ENCODE measurements at regions of chr21 and their contacts with region 1.

Region 1: GRCh38 chr21:31088315-31088714 is 50.0 kb upstream of the KRTAP19-8 start:
- DNase-seq: no peak
- H3K4me3 ChIP-seq: no peak overlapping the region
- H3K27ac ChIP-seq: no peak overlapping the region
- H3K4me1 ChIP-seq: no peaks in the 10 kb centered on the region
- CTCF ChIP-seq: no peak; the same call in 1 of the 2 replicates

Region 2: GRCh38 chr21:30340441-30341241 is 747.7 kb before region 1 on chr21:
- CTCF ChIA-PET with region 1: no interaction called
- POLR2A ChIA-PET with region 1: no interaction called
- intact Hi-C with region 1: loop called (anchors 1 kb)
- DNase-seq: peak; percentile 30
- H3K4me3 ChIP-seq: no peak overlapping the region
- H3K27ac ChIP-seq: no peak overlapping the region
- H3K4me1 ChIP-seq: no peaks in the 10 kb centered on the region
- CTCF ChIP-seq: peak; percentile 91

Region 3: GRCh38 chr21:30831194-30831765 is 257.0 kb before region 1 on chr21:
- CTCF ChIA-PET with region 1: interaction called, 3 read pairs
- POLR2A ChIA-PET with region 1: no interaction called
- intact Hi-C with region 1: loop called (anchors 2 kb)
- DNase-seq: peak; percentile 48
- H3K4me3 ChIP-seq: no peak overlapping the region
- H3K27ac ChIP-seq: no peak overlapping the region
- H3K4me1 ChIP-seq: no peaks in the 10 kb centered on the region
- CTCF ChIP-seq: peak; percentile 88

Region 4: DNA sequence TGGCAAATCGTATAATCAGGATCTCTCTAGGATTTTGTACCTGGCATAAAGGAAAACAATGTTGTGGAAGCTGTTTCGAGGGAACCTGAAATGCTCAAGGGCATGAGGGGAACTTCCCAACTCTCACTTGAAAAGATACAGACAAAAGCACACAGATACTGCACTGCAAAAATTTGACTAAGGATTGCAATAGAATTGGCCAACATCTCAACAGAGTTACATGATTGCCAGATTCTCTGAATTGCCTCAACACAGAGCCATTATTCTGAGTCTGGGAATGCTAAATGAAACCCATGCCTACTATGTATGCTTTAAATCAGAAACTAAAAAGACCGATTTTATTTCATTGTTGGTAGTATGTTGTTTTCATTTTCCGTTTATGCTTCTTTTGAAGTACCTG is 66.0 kb before region 1 on chr21:
- CTCF ChIA-PET with region 1: no interaction called
- POLR2A ChIA-PET with region 1: no interaction called
- intact Hi-C with region 1: no loop called
- DNase-seq: no peak
- H3K4me3 ChIP-seq: no peak overlapping the region
- H3K27ac ChIP-seq: no peak overlapping the region
- H3K4me1 ChIP-seq: no peaks in the 10 kb centered on the region
- CTCF ChIP-seq: no peak